GM12878 (cell line): ENCODE measurements at regions of chr9 and their contacts with region 1.

Region 1: DNA sequence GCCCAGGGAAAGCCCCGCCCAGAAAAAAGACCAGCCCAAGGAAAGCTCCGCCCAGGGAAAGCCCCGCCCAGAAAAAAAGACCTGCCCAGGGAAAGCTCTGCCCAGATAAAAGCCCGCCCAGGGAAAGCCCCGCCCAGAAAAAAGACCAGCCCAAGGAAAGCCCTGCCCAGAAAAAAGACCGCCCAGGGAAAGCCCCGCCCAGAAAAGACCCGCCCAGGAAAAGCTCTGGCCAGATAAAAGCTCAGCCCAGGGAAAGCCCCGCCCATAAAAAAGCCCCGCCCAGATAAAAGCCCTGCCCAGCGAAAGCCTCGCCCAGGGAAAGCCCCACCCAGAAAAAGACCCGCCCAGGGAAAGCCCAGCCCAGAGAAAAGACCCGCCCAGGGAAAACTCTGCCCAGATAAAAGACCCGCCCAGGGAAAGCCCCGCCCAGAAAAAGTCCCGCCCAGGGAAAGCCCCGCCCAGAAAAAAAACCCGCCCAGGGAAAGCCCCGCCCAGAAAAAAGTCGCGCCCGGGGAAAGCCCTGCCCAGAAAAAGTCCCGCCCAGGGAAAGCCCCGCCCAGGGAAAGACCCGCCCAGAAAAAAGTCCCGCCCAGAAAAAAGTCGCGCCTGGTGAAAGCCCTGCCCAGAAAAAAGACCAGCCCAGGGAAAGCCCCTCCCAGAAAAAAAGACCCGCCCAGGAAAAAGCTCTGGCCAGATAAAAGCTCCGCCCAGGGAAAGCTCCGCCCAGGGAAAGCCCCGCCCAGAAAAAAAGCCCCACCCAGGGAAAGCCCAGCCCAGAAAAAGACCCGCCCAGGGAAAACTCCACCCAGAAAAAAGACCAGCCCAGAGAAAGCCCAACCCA is 11.9 kb downstream of the GRIN1 start:
- DNase-seq: no peak
- ATAC-seq: peak; percentile 74
- H3K4me3 ChIP-seq: 0 out of 2 replicates have a peak overlapping the region, but pooled peaks have one; percentile 12
- H3K27ac ChIP-seq: peak overlapping the region; percentile 44
- H3K4me1 ChIP-seq: peaks cover 9% of the 10 kb centered on the region; the same call in 1 of the 2 replicates
- H3K27me3 ChIP-seq: no peaks in the 10 kb centered on the region
- CTCF ChIP-seq: no peak
- EP300 ChIP-seq: no peak
- POLR2A ChIP-seq: no peak
- RAD21 ChIP-seq: no peak

Region 2: DNA sequence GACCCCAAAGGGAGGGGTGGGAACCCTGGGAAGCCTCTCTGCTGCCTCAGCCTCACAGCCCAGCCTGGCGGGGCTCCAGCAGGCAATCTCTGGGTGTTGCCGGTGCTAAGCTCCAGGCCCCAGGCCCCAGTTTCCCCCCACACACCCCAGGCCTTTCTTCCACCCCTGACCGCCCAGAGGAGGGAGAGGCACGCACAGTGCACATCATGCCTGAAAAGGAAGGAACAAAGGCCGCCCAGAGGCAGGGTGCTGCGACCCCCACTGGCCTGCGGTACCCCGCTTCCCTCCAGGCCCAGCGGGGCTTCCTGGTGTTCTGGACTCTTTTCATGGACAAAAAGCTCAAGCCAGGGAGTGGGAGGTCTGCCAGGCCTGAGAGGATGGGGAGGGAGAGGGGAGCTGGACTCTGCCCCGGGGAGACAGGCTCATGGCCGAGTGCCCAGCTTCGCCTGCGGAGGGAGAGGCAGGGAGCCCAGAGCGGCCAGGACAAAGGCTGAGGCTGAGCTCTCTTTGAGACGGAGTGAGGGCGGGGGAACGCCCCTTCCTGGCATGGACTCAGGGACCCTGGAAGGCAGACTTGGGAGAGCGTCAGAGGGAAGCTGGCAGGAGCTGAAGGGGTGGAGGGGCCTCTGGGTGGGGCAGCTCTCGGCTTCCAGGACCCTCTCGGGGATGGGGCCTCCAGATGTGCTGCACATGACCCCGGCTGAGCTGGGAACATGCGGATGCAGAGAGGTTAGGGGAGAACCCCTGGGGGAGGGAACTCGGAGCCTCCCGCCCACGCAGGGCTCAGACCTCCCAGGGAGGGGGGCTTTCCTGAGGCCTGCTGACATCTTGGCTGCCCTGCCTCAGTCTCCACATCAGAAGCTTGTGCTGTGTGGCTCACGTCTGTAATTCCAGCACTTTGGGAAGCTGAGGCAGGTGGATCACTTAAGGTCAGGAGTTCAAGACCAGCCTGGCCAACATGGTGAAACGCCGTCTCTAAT is 95.2 kb before region 1 on chr9:
- CTCF ChIA-PET with region 1: no interaction called
- POLR2A ChIA-PET with region 1: no interaction called
- RAD21 ChIA-PET with region 1: no interaction called
- SMC1A ChIA-PET with region 1: no interaction called
- in situ Hi-C with region 1: no loop called
- intact Hi-C with region 1: no loop called
- DNase-seq: no peak
- ATAC-seq: no peak
- H3K4me3 ChIP-seq: no peak overlapping the region
- H3K27ac ChIP-seq: no peak overlapping the region
- H3K4me1 ChIP-seq: no peaks in the 10 kb centered on the region
- H3K27me3 ChIP-seq: peaks cover 6 to 13% of the 10 kb centered on the region in 2 experiments; a peak in 3 of 4 replicates
- CTCF ChIP-seq: no peak
- EP300 ChIP-seq: no peak
- POLR2A ChIP-seq: no peak
- RAD21 ChIP-seq: no peak

Region 3: DNA sequence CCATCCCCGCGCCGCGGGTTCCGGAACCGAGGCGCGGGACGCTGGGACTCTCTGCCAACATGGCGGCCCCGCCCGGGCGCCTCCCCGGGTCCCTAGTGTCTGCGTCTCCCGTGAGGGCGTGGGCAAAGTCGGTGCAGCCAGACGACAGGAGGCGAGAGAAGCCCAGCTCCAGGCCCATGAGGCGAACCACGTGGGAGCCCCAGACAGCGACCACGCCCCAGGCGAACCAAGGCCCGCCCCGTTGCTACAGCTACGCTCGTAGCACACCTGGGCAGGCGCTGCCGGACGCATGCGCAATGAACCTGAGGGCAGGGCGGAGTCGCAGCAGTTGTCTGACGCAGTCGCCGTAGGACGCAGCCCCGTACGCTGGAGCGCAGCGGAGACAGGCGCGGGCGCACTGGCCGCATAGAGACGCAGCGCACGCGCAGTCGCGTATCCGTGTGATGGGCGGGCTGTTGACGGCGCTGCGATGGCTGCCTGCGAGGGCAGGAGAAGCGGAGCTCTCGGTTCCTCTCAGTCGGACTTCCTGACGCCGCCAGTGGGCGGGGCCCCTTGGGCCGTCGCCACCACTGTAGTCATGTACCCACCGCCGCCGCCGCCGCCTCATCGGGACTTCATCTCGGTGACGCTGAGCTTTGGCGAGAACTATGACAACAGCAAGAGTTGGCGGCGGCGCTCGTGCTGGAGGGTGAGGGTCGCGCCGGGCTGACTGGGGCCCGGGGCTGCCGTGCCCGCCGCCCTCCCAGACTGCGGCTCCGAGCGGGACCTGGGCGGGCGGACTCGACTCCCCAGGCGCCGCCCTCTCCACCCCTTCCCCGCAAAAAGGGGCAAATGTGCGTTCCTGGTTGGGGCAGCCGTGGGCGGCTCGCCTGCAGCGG is 64.1 kb before region 1 on chr9 and contains the start of gene MAN1B1:
- CTCF ChIA-PET with region 1: no interaction called
- POLR2A ChIA-PET with region 1: interaction called, 19 read pairs
- RAD21 ChIA-PET with region 1: interaction called, 11 read pairs
- SMC1A ChIA-PET with region 1: interaction called, 3 read pairs
- in situ Hi-C with region 1: no loop called
- intact Hi-C with region 1: no loop called
- DNase-seq: peak; percentile 99
- ATAC-seq: peak; percentile 83
- H3K4me3 ChIP-seq: peak within 1 kb of the TSS; percentile 83
- H3K27ac ChIP-seq: peak within 1 kb of the TSS; percentile 90
- H3K4me1 ChIP-seq: peaks cover 29% of the 10 kb centered on the region
- H3K27me3 ChIP-seq: no peaks in the 10 kb centered on the region
- CTCF ChIP-seq: peak in 1 of 3 experiments; percentile 23; a peak in 1 of 6 replicates
- EP300 ChIP-seq: no peak
- POLR2A ChIP-seq: no peak
- RAD21 ChIP-seq: no peak
- polyA plus RNA-seq, gene MAN1B1: 0.71 to 2.0 TPM

Region 4: GRCh38 chr9:137114610-137115391 is 36.0 kb before region 1 on chr9 and contains the start of gene DPP7:
- CTCF ChIA-PET with region 1: interaction called, 3 read pairs
- POLR2A ChIA-PET with region 1: interaction called, 7 read pairs
- RAD21 ChIA-PET with region 1: interaction called, 9 read pairs
- SMC1A ChIA-PET with region 1: interaction called, 3 read pairs
- in situ Hi-C with region 1: no loop called
- intact Hi-C with region 1: loop called (anchors 5 kb)
- DNase-seq: no peak
- ATAC-seq: peak; percentile 97
- H3K4me3 ChIP-seq: peak within 1 kb of the TSS; percentile 70
- H3K27ac ChIP-seq: peak within 1 kb of the TSS; percentile 58; the same call in 1 of the 2 replicates
- H3K4me1 ChIP-seq: peaks cover 6% of the 10 kb centered on the region; the same call in 1 of the 2 replicates
- H3K27me3 ChIP-seq: no peaks in the 10 kb centered on the region
- CTCF ChIP-seq: no peak
- EP300 ChIP-seq: no peak
- POLR2A ChIP-seq: peak; percentile 87
- RAD21 ChIP-seq: no peak
- polyA plus RNA-seq, gene DPP7: 0.68 to 10.0 TPM

Region 5: GRCh38 chr9:137129456-137130175 is 21.2 kb before region 1 on chr9:
- CTCF ChIA-PET with region 1: interaction called, 20 read pairs
- POLR2A ChIA-PET with region 1: interaction called, 166 read pairs
- RAD21 ChIA-PET with region 1: interaction called, 54 read pairs
- SMC1A ChIA-PET with region 1: interaction called, 28 read pairs
- in situ Hi-C with region 1: no loop called
- intact Hi-C with region 1: loop called (anchors 1 kb)
- DNase-seq: peak; percentile 75
- ATAC-seq: peak; percentile 95
- H3K4me3 ChIP-seq: peak overlapping the region; percentile 72
- H3K27ac ChIP-seq: peak overlapping the region; percentile 82
- H3K4me1 ChIP-seq: peaks cover 8% of the 10 kb centered on the region
- H3K27me3 ChIP-seq: no peaks in the 10 kb centered on the region
- CTCF ChIP-seq: no peak
- EP300 ChIP-seq: no peak
- POLR2A ChIP-seq: peak; percentile 83
- RAD21 ChIP-seq: no peak

Region 6: DNA sequence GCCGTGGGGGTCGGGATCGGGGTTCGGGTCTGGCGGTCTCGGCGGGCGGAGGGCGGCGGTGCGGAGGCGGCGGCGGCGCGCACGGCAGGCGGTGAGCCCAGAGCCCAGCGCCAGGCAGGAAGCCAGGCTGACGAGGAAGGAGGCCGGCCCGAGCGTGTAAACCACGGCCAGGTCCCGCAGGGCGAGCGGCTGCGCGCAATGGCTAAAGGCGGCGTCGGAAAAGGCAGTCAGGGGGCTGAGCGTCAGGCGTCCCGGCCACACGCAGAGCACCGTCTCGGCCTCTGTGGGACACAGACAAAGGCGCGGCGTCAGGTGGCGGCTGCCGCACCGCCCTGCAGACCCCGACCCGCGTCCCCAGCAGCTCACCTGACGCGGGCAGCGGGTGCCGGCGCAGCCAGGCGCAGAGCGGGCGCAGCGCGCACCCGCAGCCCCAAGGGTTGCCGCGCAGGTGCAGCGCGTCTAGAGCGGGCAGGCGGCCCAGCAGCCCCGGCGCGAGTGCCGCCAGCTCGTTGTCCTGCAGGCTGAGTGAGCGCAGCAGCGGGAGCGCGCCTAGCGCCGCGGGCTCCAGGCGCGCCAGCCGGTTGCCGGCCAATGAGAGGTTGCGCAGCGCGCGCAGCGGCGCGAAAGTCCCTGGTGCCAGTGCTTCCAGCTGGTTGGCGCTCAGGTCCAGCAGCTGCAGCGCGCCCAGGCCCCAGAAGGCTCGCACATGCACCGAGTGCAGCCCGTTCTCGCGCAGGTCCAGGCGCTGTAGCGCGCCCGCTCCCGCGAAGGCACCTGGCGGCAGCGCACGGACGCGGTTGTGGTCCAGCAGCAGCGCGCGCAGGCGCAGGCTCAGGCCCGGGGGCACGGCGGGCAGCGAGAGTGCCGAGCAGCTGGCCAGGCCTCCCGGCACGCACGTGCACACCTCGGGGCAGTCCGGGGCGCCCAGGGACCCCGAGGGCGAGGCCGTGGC is 18.3 kb after region 1 on chr9:
- CTCF ChIA-PET with region 1: no interaction called
- POLR2A ChIA-PET with region 1: interaction called, 24 read pairs
- RAD21 ChIA-PET with region 1: interaction called, 25 read pairs
- SMC1A ChIA-PET with region 1: interaction called, 8 read pairs
- in situ Hi-C with region 1: no loop called
- intact Hi-C with region 1: no loop called
- DNase-seq: no peak
- ATAC-seq: peak; percentile 79
- H3K4me3 ChIP-seq: peak overlapping the region; percentile 53; the same call in 1 of the 2 replicates
- H3K27ac ChIP-seq: no peak overlapping the region
- H3K4me1 ChIP-seq: peaks cover 8% of the 10 kb centered on the region; the same call in 1 of the 2 replicates
- H3K27me3 ChIP-seq: peaks cover 0 to 8% of the 10 kb centered on the region in 2 experiments; a peak in 3 of 4 replicates
- CTCF ChIP-seq: no peak
- EP300 ChIP-seq: no peak
- POLR2A ChIP-seq: no peak
- RAD21 ChIP-seq: no peak

Region 7: DNA sequence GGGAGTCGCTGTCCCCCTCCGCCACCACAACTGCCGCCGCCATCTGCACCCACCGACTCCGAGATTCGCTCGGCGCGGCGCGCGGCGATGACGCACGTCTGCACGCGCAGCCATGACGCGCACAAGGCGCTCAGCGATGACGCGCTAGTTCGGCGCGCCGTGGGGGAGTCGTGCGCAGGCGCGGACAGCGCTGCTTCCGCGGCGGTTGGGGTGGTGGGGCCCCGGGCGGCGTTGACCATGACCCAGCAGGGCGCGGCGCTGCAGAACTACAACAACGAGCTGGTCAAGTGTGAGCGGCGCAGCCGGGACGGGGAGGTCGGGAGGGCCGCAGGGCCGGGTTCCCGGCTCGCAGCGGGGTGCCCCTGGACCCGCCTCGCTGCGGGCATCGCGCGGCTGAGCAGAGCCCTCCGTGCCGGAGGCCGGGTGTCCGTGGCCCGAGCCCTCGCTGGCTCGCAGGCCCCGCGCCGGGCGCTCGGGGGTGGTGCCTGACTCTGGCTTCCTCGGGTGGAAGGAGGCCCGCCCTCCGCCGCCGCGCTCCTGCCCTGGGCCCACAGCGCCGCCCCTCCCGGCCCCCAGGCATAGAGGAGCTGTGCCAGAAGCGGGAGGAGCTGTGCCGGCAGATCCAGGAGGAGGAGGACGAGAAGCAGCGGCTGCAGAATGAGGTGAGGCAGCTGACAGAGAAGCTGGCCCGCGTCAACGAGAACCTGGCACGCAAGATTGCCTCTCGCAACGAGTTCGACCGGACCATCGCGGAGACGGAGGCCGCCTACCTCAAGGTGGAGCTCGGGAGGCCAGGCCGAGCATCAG is 37.9 kb after region 1 on chr9 and contains the starts of genes ANAPC2 and SSNA1:
- CTCF ChIA-PET with region 1: interaction called, 9 read pairs
- POLR2A ChIA-PET with region 1: interaction called, 10 read pairs
- RAD21 ChIA-PET with region 1: interaction called, 18 read pairs
- SMC1A ChIA-PET with region 1: interaction called, 13 read pairs
- in situ Hi-C with region 1: no loop called
- intact Hi-C with region 1: no loop called
- DNase-seq: peak; percentile 82
- ATAC-seq: peak; percentile 92
- H3K4me3 ChIP-seq: peak within 1 kb of the TSS; percentile 99
- H3K27ac ChIP-seq: peak within 1 kb of the TSS; percentile 77
- H3K4me1 ChIP-seq: peaks cover 22% of the 10 kb centered on the region
- H3K27me3 ChIP-seq: no peaks in the 10 kb centered on the region
- CTCF ChIP-seq: peak; percentile 41 to 58 (median 52)
- EP300 ChIP-seq: peak; percentile 14 to 49; a peak in 1 of 4 replicates
- POLR2A ChIP-seq: peak; percentile 95
- RAD21 ChIP-seq: peak; percentile 45
- polyA plus RNA-seq, gene ANAPC2: 0.03 to 0.04 TPM
- polyA plus RNA-seq, gene SSNA1: 0.63 to 13.4 TPM